HCT116 (cell line): ENCODE measurements at regions of chr15 and their contacts with region 1.

Region 1: GRCh38 chr15:89171136-89172072 is 50.0 kb downstream of the RLBP1 start:
- DNase-seq: peak; percentile 32
- ATAC-seq: peak; percentile 66
- H3K4me3 ChIP-seq: no peak overlapping the region
- H3K27ac ChIP-seq: no peak overlapping the region
- H3K4me1 ChIP-seq: peaks cover 20 to 26% of the 10 kb centered on the region in 2 experiments
- H3K27me3 ChIP-seq: no peaks in the 10 kb centered on the region
- CTCF ChIP-seq: peak; percentile 87 to 89 (median 88)
- POLR2A ChIP-seq: no peak
- RAD21 ChIP-seq: peak; percentile 83

Region 2: GRCh38 chr15:88385078-88385700 is 786.2 kb before region 1 on chr15:
- CTCF ChIA-PET with region 1: no interaction called
- POLR2A ChIA-PET with region 1: no interaction called
- RAD21 ChIA-PET with region 1: no interaction called
- intact Hi-C with region 1: no loop called
- DNase-seq: no peak
- ATAC-seq: no peak
- H3K4me3 ChIP-seq: no peak overlapping the region
- H3K27ac ChIP-seq: no peak overlapping the region
- H3K4me1 ChIP-seq: no peaks in the 10 kb centered on the region
- H3K27me3 ChIP-seq: peaks cover 33% of the 10 kb centered on the region
- CTCF ChIP-seq: no peak
- POLR2A ChIP-seq: no peak
- RAD21 ChIP-seq: no peak

Region 3: DNA sequence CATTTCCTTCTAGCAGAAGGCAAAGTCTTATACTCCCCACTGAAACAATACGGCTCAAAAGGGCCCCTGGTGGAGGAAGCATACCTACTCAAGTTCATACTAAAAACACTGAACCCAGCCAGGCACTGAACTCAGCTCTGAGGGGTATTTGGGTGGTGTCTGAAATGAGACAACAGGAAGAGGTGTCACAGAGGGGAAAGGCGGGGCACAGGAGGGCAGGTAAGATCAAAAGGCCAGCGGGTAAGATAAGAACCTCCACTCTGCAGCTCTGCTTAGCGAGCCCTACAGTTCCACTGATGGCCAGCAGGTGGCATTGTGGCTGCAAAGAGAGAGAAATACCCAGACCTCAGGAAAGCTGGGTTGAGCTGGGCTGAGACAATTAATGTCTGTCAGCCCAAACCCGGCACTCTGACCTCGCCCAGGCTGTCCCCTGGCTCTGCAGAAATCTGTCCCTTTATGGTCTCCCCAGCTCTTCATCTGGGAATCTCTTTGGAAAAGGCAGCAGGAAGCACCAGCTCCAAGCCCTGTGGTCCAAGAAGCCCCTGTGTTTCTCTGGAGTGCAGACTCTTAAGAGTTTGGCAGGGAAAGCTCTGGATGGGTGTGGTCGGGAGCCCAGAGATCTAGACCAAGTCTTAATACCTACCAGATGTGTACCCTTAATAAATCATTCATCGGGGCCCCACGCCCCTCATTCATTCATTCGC is 266.6 kb before region 1 on chr15:
- CTCF ChIA-PET with region 1: interaction called, 10 read pairs
- POLR2A ChIA-PET with region 1: no interaction called
- RAD21 ChIA-PET with region 1: no interaction called
- intact Hi-C with region 1: loop called (anchors 2 kb)
- DNase-seq: no peak
- ATAC-seq: peak; percentile 90
- H3K4me3 ChIP-seq: no peak overlapping the region
- H3K27ac ChIP-seq: no peak overlapping the region
- H3K4me1 ChIP-seq: peaks cover 7 to 28% of the 10 kb centered on the region in 2 experiments; a peak in 3 of 4 replicates
- H3K27me3 ChIP-seq: no peaks in the 10 kb centered on the region
- CTCF ChIP-seq: peak; percentile 94 to 97 (median 97)
- POLR2A ChIP-seq: no peak
- RAD21 ChIP-seq: peak; percentile 94

Region 4: GRCh38 chr15:89034288-89034687 is 137.1 kb before region 1 on chr15:
- CTCF ChIA-PET with region 1: interaction called, 11 read pairs
- POLR2A ChIA-PET with region 1: no interaction called
- RAD21 ChIA-PET with region 1: no interaction called
- intact Hi-C with region 1: no loop called
- DNase-seq: peak; percentile 29
- ATAC-seq: peak; percentile 73
- H3K4me3 ChIP-seq: no peak overlapping the region
- H3K27ac ChIP-seq: no peak overlapping the region
- H3K4me1 ChIP-seq: no peaks in the 10 kb centered on the region
- H3K27me3 ChIP-seq: no peaks in the 10 kb centered on the region
- CTCF ChIP-seq: peak; percentile 53 to 61 (median 54); a peak in 5 of 6 replicates
- POLR2A ChIP-seq: no peak
- RAD21 ChIP-seq: peak; percentile 72

Region 5: GRCh38 chr15:89057504-89058133 is 113.8 kb before region 1 on chr15:
- CTCF ChIA-PET with region 1: interaction called, 38 read pairs
- POLR2A ChIA-PET with region 1: no interaction called
- RAD21 ChIA-PET with region 1: interaction called, 4 to 6 read pairs
- intact Hi-C with region 1: loop called (anchors 1 kb)
- DNase-seq: peak; percentile 45
- ATAC-seq: peak; percentile 98
- H3K4me3 ChIP-seq: no peak overlapping the region
- H3K27ac ChIP-seq: no peak overlapping the region
- H3K4me1 ChIP-seq: peaks cover 0 to 6% of the 10 kb centered on the region in 2 experiments; a peak in 1 of 4 replicates
- H3K27me3 ChIP-seq: no peaks in the 10 kb centered on the region
- CTCF ChIP-seq: peak; percentile 98 to 99 (median 99)
- POLR2A ChIP-seq: no peak
- RAD21 ChIP-seq: peak; percentile 97

Region 6: GRCh38 chr15:89087830-89088604 is 83.4 kb before region 1 on chr15 and contains the start of gene ABHD2:
- CTCF ChIA-PET with region 1: interaction called, 11 read pairs
- POLR2A ChIA-PET with region 1: interaction called, 6 read pairs
- RAD21 ChIA-PET with region 1: no interaction called
- intact Hi-C with region 1: no loop called
- DNase-seq: peak; percentile 100
- ATAC-seq: peak; percentile 98
- H3K4me3 ChIP-seq: peak within 1 kb of the TSS; percentile 86 to 89
- H3K27ac ChIP-seq: peak within 1 kb of the TSS; percentile 57
- H3K4me1 ChIP-seq: peaks cover 12 to 35% of the 10 kb centered on the region in 2 experiments
- H3K27me3 ChIP-seq: no peaks in the 10 kb centered on the region
- CTCF ChIP-seq: no peak
- POLR2A ChIP-seq: no peak
- RAD21 ChIP-seq: no peak
- total RNA-seq, gene ABHD2: 40.8 TPM

Region 7: DNA sequence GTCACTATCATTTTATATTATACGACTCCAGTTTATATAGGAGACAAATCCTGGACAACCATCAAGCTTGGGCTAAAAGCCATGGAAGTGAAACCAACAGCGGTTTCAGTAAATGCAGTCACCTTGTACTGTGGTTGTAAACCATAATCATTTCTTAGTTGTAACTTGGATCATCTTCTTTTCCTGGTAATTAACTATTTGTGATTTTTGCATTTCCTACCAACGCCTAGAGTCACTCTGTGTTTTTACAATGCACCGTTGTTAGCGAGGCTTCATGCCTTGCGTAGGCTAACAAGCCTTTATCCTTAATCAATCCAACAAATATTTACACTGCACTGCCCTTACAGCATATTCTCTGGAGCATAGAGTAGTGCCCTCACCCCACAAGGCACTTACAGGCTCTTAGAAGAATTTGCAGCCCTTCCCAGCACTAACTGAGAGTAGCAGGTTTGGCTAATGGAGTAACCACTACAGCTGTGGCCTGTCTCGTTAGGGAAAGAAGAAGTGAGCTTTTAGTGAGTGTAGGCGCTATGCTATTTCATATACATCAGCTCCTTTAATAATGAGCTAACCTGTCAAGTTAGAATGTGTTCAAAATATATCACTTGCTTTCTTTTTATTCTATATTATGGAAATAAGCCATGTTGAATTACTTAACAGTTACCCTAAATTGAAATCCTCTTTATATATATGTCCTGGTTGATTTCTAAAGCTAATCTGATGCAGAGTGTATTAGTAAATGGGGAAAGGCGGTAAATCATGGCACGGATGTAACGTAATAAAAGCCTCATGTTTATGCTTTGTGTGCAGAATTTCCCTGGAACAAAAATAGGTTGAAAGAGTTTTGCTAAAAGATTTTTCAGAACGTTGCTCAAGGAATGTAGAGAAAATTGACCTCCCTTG is 20.4 kb before region 1 on chr15:
- CTCF ChIA-PET with region 1: interaction called, 10 read pairs
- POLR2A ChIA-PET with region 1: no interaction called
- RAD21 ChIA-PET with region 1: no interaction called
- intact Hi-C with region 1: no loop called
- DNase-seq: no peak
- ATAC-seq: no peak
- H3K4me3 ChIP-seq: no peak overlapping the region
- H3K27ac ChIP-seq: no peak overlapping the region
- H3K4me1 ChIP-seq: no peaks in the 10 kb centered on the region
- H3K27me3 ChIP-seq: no peaks in the 10 kb centered on the region
- CTCF ChIP-seq: no peak
- POLR2A ChIP-seq: no peak
- RAD21 ChIP-seq: no peak

Region 8: GRCh38 chr15:89358755-89359439 is 187.5 kb after region 1 on chr15:
- CTCF ChIA-PET with region 1: no interaction called
- POLR2A ChIA-PET with region 1: no interaction called
- RAD21 ChIA-PET with region 1: no interaction called
- intact Hi-C with region 1: no loop called
- DNase-seq: peak; percentile 59
- ATAC-seq: peak; percentile 88
- H3K4me3 ChIP-seq: peak overlapping the region; percentile 40 to 55
- H3K27ac ChIP-seq: peak overlapping the region; percentile 28; the same call in 1 of the 2 replicates
- H3K4me1 ChIP-seq: peaks cover 2 to 16% of the 10 kb centered on the region in 2 experiments; a peak in 1 of 4 replicates
- H3K27me3 ChIP-seq: peaks cover 10% of the 10 kb centered on the region; the same call in 1 of the 2 replicates
- CTCF ChIP-seq: peak; percentile 83 to 99 (median 95)
- POLR2A ChIP-seq: no peak
- RAD21 ChIP-seq: peak; percentile 97

Region 9: GRCh38 chr15:89566141-89566540 is 394.7 kb after region 1 on chr15:
- CTCF ChIA-PET with region 1: no interaction called
- POLR2A ChIA-PET with region 1: no interaction called
- RAD21 ChIA-PET with region 1: no interaction called
- intact Hi-C with region 1: no loop called
- DNase-seq: no peak
- ATAC-seq: no peak
- H3K4me3 ChIP-seq: no peak overlapping the region
- H3K27ac ChIP-seq: no peak overlapping the region
- H3K4me1 ChIP-seq: peaks cover 0 to 5% of the 10 kb centered on the region in 2 experiments; a peak in 2 of 4 replicates
- H3K27me3 ChIP-seq: no peaks in the 10 kb centered on the region
- CTCF ChIP-seq: no peak
- POLR2A ChIP-seq: no peak
- RAD21 ChIP-seq: no peak